GM10248 (cell line): ENCODE measurements at regions of chr19 and their contacts with region 1.

Region 1: GRCh38 chr19:3471954-3472655 is 8.2 kb downstream of the SMIM24 start:
- DNase-seq: peak; percentile 62
- CTCF ChIP-seq: peak; percentile 58

Region 2: GRCh38 chr19:3304871-3305423 is 167.2 kb before region 1 on chr19:
- CTCF ChIA-PET with region 1: interaction called, 17 read pairs
- POLR2A ChIA-PET with region 1: no interaction called
- DNase-seq: peak; percentile 83
- CTCF ChIP-seq: peak; percentile 85

Region 3: DNA sequence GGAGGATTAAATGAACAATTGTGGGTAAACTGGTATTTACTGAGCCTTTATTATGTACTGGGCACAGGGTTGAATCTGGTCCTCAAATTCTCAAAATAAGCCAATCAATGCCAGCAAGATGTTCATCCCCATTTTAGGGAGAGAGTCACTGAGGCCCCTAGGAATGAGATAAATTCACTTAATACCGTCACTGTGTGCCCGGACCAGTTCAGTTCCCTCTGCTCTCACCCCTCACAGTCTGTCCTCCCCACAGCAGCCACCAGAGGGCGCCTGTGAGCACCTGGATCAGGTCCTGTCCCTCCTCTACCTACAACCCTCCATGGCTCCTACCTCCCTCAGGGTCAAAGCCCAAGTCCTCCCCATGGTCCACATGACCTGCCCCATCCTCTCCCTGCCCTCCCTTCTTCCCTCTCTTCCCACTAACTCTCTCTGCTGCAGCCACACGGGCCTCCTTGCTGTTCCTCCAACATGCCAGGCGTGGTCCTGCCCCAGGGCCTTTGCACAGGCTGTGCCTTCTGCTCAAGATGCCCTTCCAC is 147.7 kb before region 1 on chr19:
- CTCF ChIA-PET with region 1: interaction called, 20 read pairs
- POLR2A ChIA-PET with region 1: no interaction called
- DNase-seq: peak; percentile 73
- CTCF ChIP-seq: peak; percentile 65

Region 4: DNA sequence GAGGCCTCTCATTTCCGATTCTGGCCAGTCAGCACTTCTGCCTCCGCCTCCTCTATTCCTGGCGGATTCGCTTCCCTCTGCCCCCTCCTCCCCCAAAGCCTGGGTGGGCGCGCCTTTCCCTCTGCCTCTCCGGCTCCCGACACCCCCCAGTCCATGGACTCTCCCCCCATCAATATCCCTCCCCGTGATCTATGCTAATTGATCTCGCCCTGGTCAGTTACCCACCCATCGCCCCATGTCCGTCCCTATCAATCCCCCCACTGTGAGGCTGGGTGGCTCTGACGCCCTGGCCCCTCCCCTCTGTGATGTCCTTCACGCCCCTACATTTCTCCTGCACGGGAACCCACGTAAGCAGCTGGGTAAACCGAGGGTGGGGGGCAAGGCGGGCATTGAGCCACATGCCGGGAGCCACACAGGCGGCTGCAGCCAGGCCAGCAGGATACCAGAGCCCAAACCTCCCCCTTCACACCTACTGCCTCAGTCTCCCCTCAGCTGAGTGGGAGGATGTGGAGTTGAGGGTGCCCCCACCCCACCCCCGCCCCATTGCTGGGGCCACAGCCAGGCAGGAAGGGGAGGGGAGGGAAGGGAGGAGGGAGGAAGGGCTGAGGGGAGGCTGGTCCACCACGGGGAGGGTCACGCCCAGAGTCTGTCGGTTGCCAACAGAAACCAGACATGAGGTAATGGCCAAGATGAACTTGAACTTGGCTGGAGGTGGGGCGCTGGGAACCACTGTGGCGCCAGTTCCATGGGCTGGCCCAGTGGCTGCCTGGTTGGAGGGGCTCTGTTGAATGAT is 12.8 kb before region 1 on chr19:
- CTCF ChIA-PET with region 1: interaction called, 13 read pairs
- POLR2A ChIA-PET with region 1: interaction called, 3 read pairs
- DNase-seq: no peak
- CTCF ChIP-seq: no peak

Region 5: GRCh38 chr19:3494051-3494450 is 21.9 kb after region 1 on chr19:
- CTCF ChIA-PET with region 1: interaction called, 10 read pairs
- POLR2A ChIA-PET with region 1: no interaction called
- DNase-seq: no peak
- CTCF ChIP-seq: no peak

Region 6: GRCh38 chr19:3692141-3693024 is 220.3 kb after region 1 on chr19:
- CTCF ChIA-PET with region 1: no interaction called
- POLR2A ChIA-PET with region 1: no interaction called
- DNase-seq: no peak
- CTCF ChIP-seq: peak; percentile 50

Region 7: GRCh38 chr19:4241824-4242430 is 769.8 kb after region 1 on chr19:
- CTCF ChIA-PET with region 1: no interaction called
- POLR2A ChIA-PET with region 1: interaction called, 11 read pairs
- DNase-seq: no peak
- CTCF ChIP-seq: no peak